ENCODE measurements at regions of chr12 and their contacts with region 1.

Region 1: GRCh38 chr12:22900401-22900800 is 275.4 kb downstream of the ETNK1 start:
- DNase-seq: no peak
- ATAC-seq: no peak
- H3K4me3 ChIP-seq: no peak overlapping the region
- H3K27ac ChIP-seq: no peak overlapping the region
- H3K4me1 ChIP-seq: no peaks in the 10 kb centered on the region
- H3K27me3 ChIP-seq: no peaks in the 10 kb centered on the region
- CTCF ChIP-seq: no peak
- POLR2A ChIP-seq: no peak
- RAD21 ChIP-seq: no peak

Region 2: GRCh38 chr12:22969521-22969920 is 69.1 kb after region 1 on chr12:
- CTCF ChIA-PET with region 1: no interaction called
- POLR2A ChIA-PET with region 1: no interaction called
- RAD21 ChIA-PET with region 1: no interaction called
- intact Hi-C with region 1: loop called (anchors 5 kb)
- DNase-seq: no peak
- ATAC-seq: no peak
- H3K4me3 ChIP-seq: no peak overlapping the region
- H3K27ac ChIP-seq: no peak overlapping the region
- H3K4me1 ChIP-seq: no peaks in the 10 kb centered on the region
- H3K27me3 ChIP-seq: peaks cover 3% of the 10 kb centered on the region
- CTCF ChIP-seq: no peak
- POLR2A ChIP-seq: no peak
- RAD21 ChIP-seq: no peak

Measured in HCT116 (cell line).